ENCODE measurements at regions of chr1 and their contacts with region 1.

Region 1: DNA sequence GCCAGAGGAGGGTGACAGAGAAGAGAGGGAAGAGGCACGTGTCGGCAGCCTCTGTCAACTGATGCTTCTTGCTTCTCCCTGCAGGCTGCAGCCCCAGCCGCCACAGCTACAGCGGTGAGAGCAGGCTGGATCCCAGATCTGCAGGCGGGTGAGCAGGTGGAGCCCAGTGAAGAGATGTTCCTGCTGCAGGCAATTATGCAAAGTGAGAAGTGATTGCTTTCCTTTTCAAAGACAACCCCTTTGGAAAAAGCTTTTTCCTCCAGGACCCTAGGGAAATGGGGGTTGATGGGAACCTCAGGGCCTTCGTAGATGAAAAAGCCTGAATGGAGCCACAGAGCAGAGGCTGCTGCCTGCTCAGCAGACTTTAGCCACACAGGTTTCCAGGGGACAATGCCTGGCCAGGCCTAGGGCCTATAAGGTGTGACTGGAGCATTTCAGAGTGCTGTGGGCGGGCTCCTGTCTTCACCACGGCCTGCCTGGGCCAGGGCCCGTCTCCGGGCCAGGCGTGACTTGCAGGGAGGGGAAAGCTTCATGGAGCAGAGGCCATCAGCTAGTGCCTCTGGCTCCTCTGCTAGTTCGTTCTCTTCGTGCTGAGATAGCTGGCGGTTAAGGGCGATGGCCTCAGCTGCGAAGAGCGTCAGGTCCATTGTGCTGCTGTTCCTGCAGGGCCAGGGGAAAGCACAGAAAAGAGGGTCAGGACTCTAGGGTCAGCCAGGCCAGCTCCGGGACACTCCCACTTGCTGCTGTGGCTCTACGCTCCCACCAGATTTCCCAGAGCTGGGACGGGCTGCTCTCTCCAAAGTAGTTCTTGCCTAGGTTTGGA is 6.9 kb upstream of the KNCN start:
- DNase-seq: no peak
- H3K4me3 Mint-ChIP-seq: no peak overlapping the region
- H3K27ac Mint-ChIP-seq: peak overlapping the region; percentile 19
- H3K4me1 Mint-ChIP-seq: no peaks in the 10 kb centered on the region
- H3K27me3 Mint-ChIP-seq: peaks cover 3% of the 10 kb centered on the region

Region 2: GRCh38 chr1:46547481-46548383 is 10.6 kb before region 1 on chr1:
- CTCF ChIA-PET with region 1: interaction called, 18 read pairs
- DNase-seq: peak; percentile 28
- H3K4me3 Mint-ChIP-seq: no peak overlapping the region
- H3K27ac Mint-ChIP-seq: peak overlapping the region; percentile 39
- H3K4me1 Mint-ChIP-seq: peaks cover 13% of the 10 kb centered on the region
- H3K27me3 Mint-ChIP-seq: peaks cover 80% of the 10 kb centered on the region

Measured in activated naive CD4-positive, alpha-beta T cell treated with anti-CD3 and anti-CD28 coated beads, Interleukin-2, amount 10 ng/mL, durations not matched to agents 7 days and 5 days (primary cell).